CD14-positive monocyte (primary cell): ENCODE measurements at regions of chr3 and their contacts with region 1.

Region 1: DNA sequence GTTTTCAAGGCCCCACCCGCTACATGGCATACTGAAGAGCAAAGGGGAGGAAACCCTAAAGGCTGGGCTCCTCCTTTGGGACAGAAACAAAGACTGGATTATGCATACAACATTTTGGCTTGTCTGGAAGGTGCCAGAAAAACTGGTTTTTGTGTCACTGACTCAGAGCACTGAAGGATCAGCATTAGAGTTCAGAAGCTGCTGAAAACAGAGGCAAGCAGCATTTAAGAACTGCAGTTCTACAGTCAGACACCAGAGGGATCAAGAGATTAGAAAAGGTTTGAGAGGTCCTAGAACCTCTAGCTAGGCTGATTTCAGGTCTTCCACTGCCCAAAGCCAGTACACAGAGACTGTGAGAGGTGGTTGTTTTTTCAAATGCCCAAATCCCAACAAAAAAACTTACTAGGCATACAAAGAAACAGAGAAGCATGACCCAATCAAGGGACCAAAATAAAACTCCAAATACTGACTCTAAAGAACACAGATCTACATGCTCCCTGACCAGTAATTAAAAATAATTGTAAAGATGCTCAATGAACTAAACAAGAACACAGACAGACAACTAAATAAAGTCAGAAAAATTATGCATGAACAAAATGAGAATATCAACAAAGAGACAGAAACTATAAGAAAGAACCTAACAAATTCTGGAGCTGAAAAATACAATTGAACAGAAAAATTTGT is 91.2 kb downstream of the SENP2 start:
- DNase-seq: peak; percentile 22 to 68 (median 60)
- H3K4me3 ChIP-seq: no peak overlapping the region
- H3K4me3 Mint-ChIP-seq: no peak overlapping the region
- H3K27ac ChIP-seq: no peak overlapping the region
- H3K27ac Mint-ChIP-seq: peak overlapping the region in 1 of 7 donors; percentile 0
- H3K4me1 ChIP-seq: no peaks in the 10 kb centered on the region
- H3K4me1 Mint-ChIP-seq: no peaks in the 10 kb centered on the region
- H3K27me3 ChIP-seq: no peaks in the 10 kb centered on the region
- H3K27me3 Mint-ChIP-seq: peaks cover 0 to 2% (median 0%) of the 10 kb centered on the region in 3 donors
- CTCF ChIP-seq: peak; percentile 77

Region 2: DNA sequence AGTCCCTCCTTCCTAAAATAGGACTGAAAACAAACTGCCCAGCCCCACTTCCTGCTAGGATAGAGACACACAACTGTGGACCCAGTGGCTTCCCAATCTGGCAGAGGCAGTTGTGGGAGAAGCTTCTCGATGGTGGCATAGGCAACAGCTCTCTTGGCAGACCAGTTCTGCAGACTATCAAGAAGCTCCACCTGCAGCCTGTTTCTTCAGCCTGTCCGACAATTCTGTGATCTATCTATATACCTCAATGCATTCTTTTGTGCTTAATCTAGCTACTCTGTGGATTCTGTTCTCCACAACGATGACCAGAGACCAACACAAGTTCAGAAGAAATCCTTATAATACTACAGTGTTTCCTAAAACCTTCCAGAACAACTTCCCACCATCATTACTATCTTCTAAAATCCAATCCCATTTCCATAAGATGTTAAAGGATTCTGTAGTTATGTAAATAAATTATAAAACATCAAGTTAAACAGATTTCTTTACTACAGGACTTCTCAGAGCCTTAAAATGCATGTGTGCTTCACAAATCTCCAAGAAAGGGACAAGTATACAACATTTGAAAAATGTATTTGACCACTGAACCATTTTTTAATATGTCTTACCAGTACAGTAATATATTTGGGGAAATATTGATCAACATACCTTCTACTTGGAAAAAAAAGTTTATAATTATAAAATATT is 89.9 kb after region 1 on chr3:
- intact Hi-C with region 1: loop called (anchors 5 kb)
- DNase-seq: peak in 1 of 3 donors; percentile 11
- H3K4me3 ChIP-seq: no peak overlapping the region
- H3K4me3 Mint-ChIP-seq: peak overlapping the region in 1 of 2 donors; percentile 26
- H3K27ac ChIP-seq: peak overlapping the region in 1 of 2 donors; percentile 34
- H3K27ac Mint-ChIP-seq: peak overlapping the region; percentile 8 to 82 (median 58)
- H3K4me1 ChIP-seq: peaks cover 28 to 31% of the 10 kb centered on the region in 2 donors
- H3K4me1 Mint-ChIP-seq: peaks cover 33% of the 10 kb centered on the region
- H3K27me3 ChIP-seq: no peaks in the 10 kb centered on the region
- H3K27me3 Mint-ChIP-seq: peaks cover 0 to 1% (median 0%) of the 10 kb centered on the region in 3 donors
- CTCF ChIP-seq: no peak

Region 3: GRCh38 chr3:185959609-185960517 is 282.6 kb after region 1 on chr3:
- intact Hi-C with region 1: no loop called
- DNase-seq: peak; percentile 69 to 81 (median 74)
- H3K4me3 ChIP-seq: peak overlapping the region in 2 of 3 experiments; percentile 27 to 61
- H3K4me3 Mint-ChIP-seq: peak overlapping the region in 1 of 2 donors; percentile 40
- H3K27ac ChIP-seq: peak overlapping the region; percentile 68 to 85
- H3K27ac Mint-ChIP-seq: peak overlapping the region in 1 of 7 donors; percentile 89
- H3K4me1 ChIP-seq: peaks cover 21 to 24% of the 10 kb centered on the region in 2 donors
- H3K4me1 Mint-ChIP-seq: peaks cover 9% of the 10 kb centered on the region
- H3K27me3 ChIP-seq: no peaks in the 10 kb centered on the region
- H3K27me3 Mint-ChIP-seq: peaks cover 0 to 1% (median 0%) of the 10 kb centered on the region in 3 donors
- CTCF ChIP-seq: no peak